ENCODE measurements at regions of chr9 and their contacts with region 1.

Region 1: DNA sequence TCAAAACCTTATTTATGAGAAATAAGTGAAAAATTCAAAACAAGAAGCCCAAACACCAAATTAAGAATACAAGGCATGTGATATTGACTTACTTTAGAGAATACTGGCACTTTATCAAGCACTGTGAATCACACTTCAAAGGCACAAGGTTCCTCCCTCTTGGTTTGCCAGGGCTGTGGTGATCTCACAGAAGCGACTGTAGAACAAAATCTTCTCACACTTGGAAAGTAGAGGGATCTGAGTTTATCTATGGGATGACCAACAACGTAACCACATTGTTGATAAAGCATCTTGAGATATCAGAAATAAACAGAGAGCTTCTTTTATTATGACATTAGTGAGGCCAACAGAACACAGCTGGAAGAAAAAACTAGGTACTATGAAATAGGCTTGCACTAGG is 295.9 kb downstream of the NFIB start:
- H3K4me3 Mint-ChIP-seq: no peak overlapping the region
- H3K27ac Mint-ChIP-seq: no peak overlapping the region
- H3K4me1 Mint-ChIP-seq: no peaks in the 10 kb centered on the region
- H3K27me3 Mint-ChIP-seq: no peaks in the 10 kb centered on the region

Region 2: GRCh38 chr9:13939134-13939533 is 78.9 kb before region 1 on chr9:
- intact Hi-C with region 1: loop called (anchors 10 kb)
- H3K4me3 Mint-ChIP-seq: no peak overlapping the region
- H3K27ac Mint-ChIP-seq: no peak overlapping the region
- H3K4me1 Mint-ChIP-seq: no peaks in the 10 kb centered on the region
- H3K27me3 Mint-ChIP-seq: no peaks in the 10 kb centered on the region

Region 3: DNA sequence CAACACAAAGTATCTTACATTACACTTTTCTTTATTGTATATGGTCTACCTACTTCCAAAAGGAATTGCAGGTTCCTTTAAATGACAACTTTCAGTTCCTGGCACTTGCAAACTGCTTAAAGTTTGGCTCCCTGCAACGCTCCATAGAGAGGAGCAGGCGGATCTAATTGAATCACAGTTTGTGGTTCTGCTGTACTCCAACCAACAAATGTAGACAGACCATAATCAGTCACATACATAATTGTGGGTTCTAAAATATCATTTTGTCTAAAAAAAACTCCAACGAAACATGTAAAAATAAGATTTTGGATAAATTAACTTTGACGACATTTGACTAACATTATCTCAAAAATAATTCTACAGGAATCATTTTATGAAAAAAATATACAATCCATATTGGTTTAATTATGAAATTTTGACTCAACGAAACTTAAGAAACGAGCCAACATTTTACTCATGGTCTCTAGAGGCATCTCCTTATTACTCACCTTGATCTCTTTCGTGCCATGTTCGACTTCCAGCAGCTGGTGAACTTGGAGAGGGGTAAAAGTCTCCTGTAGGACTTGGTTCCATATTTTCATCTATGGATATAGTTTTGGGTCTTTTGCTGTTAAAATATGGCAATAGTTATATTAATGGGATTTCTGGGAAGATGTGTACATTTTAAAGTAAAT is 128.3 kb after region 1 on chr9:
- intact Hi-C with region 1: no loop called
- H3K4me3 Mint-ChIP-seq: no peak overlapping the region
- H3K27ac Mint-ChIP-seq: no peak overlapping the region
- H3K4me1 Mint-ChIP-seq: no peaks in the 10 kb centered on the region
- H3K27me3 Mint-ChIP-seq: no peaks in the 10 kb centered on the region

Measured in dendritic cell treated with granulocyte-macrophage colony-stimulating factor and Interleukin-4, amounts not matched to agents 40 ng/mL and 50 ng/mL, for 4 days (primary cell).